Breast epithelium (tissue), 4 donors: ENCODE measurements at regions of chr5 and their contacts with region 1.

Region 1: GRCh38 chr5:108079753-108080152 is 302.1 kb downstream of the FBXL17 start:
- DNase-seq: no peak
- H3K4me3 ChIP-seq: no peak overlapping the region
- H3K27ac ChIP-seq: no peak overlapping the region
- H3K4me1 ChIP-seq: no peaks in the 10 kb centered on the region
- H3K27me3 ChIP-seq: no peaks in the 10 kb centered on the region
- CTCF ChIP-seq: no peak
- POLR2A ChIP-seq: no peak

Region 2: GRCh38 chr5:107589520-107590193 is 490.1 kb before region 1 on chr5:
- intact Hi-C with region 1: loop called (anchors 5 kb)
- DNase-seq: no peak
- H3K4me3 ChIP-seq: no peak overlapping the region
- H3K27ac ChIP-seq: no peak overlapping the region
- H3K4me1 ChIP-seq: no peaks in the 10 kb centered on the region
- H3K27me3 ChIP-seq: no peaks in the 10 kb centered on the region
- CTCF ChIP-seq: no peak
- POLR2A ChIP-seq: no peak

Region 3: DNA sequence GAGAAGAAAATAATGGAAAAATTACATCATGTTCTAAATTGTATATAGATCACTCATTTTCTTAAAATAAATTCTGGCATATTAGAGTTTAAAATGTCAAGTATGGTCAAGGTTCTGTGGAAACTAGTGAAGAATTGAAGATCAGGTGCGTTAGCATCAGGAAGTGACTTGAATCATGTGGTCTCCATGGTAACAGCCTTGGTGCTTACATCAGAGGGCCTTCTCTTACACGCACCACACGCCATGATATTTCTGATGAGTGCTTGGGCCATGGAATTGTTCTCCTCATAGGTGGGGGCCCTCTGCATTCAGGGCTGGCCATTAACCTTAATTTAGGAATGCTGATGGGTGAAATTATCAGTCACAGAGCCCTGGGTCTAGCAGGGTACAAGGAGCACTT is 120.9 kb before region 1 on chr5:
- intact Hi-C with region 1: no loop called
- DNase-seq: no peak
- H3K4me3 ChIP-seq: no peak overlapping the region
- H3K27ac ChIP-seq: no peak overlapping the region
- H3K4me1 ChIP-seq: no peaks in the 10 kb centered on the region
- H3K27me3 ChIP-seq: no peaks in the 10 kb centered on the region
- CTCF ChIP-seq: no peak
- POLR2A ChIP-seq: no peak

Region 4: DNA sequence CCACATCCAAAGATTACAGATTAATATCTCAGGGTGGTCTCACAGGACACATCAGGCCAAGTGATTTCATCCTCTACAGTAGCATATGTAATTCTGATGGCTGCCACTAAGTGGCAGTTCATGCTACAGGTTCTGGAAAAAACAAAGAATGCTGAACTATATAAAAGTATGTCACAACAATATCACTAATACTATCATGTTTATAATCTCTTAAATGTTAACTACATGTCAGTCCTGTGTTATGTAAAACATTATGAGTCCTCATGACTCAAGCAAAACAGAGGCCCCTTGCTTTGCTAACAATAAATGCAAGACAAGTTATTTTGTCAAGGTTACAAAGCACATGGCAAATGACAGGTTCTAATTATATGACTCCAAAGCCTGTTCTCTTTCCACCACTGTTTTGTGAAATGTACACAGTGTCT is 69.0 kb after region 1 on chr5:
- intact Hi-C with region 1: no loop called
- DNase-seq: no peak
- H3K4me3 ChIP-seq: no peak overlapping the region
- H3K27ac ChIP-seq: no peak overlapping the region
- H3K4me1 ChIP-seq: no peaks in the 10 kb centered on the region
- H3K27me3 ChIP-seq: no peaks in the 10 kb centered on the region
- CTCF ChIP-seq: no peak
- POLR2A ChIP-seq: no peak